ENCODE measurements at regions of chr7 and their contacts with region 1.

Region 1: GRCh38 chr7:5396999-5397663 is 26.5 kb downstream of the TNRC18 start:
- DNase-seq: peak; percentile 77 to 99 (median 87)
- ATAC-seq: peak; percentile 89
- H3K4me3 ChIP-seq: peak overlapping the region; percentile 93
- H3K4me3 Mint-ChIP-seq: peak overlapping the region; percentile 91
- H3K27ac ChIP-seq: peak overlapping the region; percentile 77 to 91
- H3K27ac Mint-ChIP-seq: peak overlapping the region; percentile 91
- H3K4me1 ChIP-seq: peaks cover 48% of the 10 kb centered on the region
- H3K4me1 Mint-ChIP-seq: peaks cover 25% of the 10 kb centered on the region
- H3K27me3 ChIP-seq: no peaks in the 10 kb centered on the region
- H3K27me3 Mint-ChIP-seq: no peaks in the 10 kb centered on the region
- CTCF ChIP-seq: no peak

Region 2: GRCh38 chr7:5423844-5424688 is 26.9 kb after region 1 on chr7:
- CTCF ChIA-PET with region 1: interaction called, 4 read pairs
- POLR2A ChIA-PET with region 1: interaction called, 25 read pairs
- intact Hi-C with region 1: loop called (anchors 2 kb)
- DNase-seq: peak in 8 of 14 experiments; percentile 18 to 82 (median 50)
- ATAC-seq: peak; percentile 43
- H3K4me3 ChIP-seq: peak overlapping the region; percentile 42
- H3K4me3 Mint-ChIP-seq: peak overlapping the region; percentile 88
- H3K27ac ChIP-seq: no peak overlapping the region
- H3K27ac Mint-ChIP-seq: peak overlapping the region; percentile 61
- H3K4me1 ChIP-seq: peaks cover 98% of the 10 kb centered on the region
- H3K4me1 Mint-ChIP-seq: peaks cover 49% of the 10 kb centered on the region
- H3K27me3 ChIP-seq: peaks cover 86 to 88% of the 10 kb centered on the region in 2 experiments
- H3K27me3 Mint-ChIP-seq: peaks cover 71% of the 10 kb centered on the region
- CTCF ChIP-seq: no peak

Region 3: DNA sequence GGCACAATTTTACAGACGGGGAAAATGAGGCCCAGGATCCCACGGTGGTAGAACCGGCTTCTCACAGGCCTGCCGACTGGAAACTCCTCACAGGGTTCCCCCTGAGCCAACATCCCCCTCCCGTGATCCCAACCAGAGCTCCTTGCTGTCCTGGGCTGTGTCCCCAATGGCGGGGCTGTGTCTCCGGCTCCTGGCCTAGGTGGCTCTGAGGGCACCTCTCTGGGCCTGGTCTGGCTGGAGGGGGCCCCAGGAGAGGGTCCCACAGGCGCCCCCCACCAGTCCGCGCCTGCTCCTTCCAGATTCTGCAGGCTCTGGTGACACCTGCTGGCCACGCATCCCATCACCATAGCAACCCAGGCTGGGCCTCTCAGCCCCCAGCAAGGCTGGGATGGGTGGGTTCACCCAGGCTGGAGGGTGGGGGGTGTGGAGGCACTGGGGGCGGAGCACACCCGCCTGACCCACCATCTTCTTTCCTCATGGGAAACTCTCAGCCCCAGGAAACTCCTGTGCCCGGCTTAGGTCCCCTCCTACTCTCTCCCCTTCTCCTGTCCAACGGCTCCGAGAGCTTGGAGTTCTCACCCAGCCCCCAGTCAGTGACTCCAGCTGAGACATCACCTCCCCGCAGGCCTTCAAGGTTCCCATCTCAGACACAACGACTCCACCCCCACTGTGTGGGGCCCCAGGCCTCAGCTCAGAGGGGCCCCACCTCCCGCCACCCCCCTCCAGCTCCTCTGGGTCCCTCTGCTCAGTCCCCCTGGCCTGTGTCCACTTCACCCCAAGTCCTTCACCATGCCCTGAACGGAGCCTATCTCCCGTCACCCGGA is 53.6 kb after region 1 on chr7:
- CTCF ChIA-PET with region 1: interaction called, 8 read pairs
- POLR2A ChIA-PET with region 1: interaction called, 5 read pairs
- intact Hi-C with region 1: loop called (anchors 1 to 2 kb)
- DNase-seq: peak in 11 of 14 experiments; percentile 20 to 69 (median 41)
- ATAC-seq: peak; percentile 68
- H3K4me3 ChIP-seq: no peak overlapping the region
- H3K4me3 Mint-ChIP-seq: no peak overlapping the region
- H3K27ac ChIP-seq: no peak overlapping the region
- H3K27ac Mint-ChIP-seq: no peak overlapping the region
- H3K4me1 ChIP-seq: no peaks in the 10 kb centered on the region
- H3K4me1 Mint-ChIP-seq: no peaks in the 10 kb centered on the region
- H3K27me3 ChIP-seq: peaks cover 0 to 3% of the 10 kb centered on the region in 2 experiments
- H3K27me3 Mint-ChIP-seq: peaks cover 4% of the 10 kb centered on the region
- CTCF ChIP-seq: peak; percentile 71

Region 4: DNA sequence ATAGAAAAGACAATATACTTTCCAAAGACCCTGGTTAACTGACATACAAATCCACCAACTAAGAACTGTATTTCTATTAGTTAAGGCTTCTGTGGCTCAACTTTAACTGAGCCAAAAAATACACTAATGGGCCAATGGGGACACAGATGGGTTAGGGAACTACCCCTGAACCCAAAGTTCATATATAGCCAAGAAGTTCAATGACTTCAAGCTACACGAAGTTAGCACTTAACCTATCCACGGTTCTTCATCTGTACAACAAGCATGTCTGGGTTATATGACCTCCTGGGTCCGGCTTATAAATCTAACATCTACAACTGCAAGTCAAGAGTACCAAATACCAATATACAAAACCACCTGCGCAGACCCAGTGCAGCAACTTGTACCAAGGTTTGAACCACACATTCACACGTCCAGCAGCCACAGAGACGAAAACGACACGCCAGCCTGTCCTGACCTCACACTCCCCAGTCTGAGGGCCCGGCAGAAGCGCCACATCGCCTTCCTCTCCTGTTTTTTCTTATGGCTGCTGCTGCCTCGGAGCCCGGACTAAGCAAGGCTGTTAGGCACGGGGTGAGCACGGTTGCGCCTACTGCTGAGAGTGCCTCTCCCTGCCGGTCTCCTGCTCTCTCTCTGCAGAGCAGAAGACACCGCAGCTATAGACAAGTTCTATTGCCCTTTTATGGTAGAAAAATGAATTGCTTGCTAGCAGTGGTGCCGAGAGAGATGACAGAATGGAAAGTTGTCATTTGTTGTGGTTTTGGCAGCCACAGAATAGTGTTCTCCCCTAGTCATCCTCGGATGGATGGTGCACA is 298.0 kb after region 1 on chr7:
- CTCF ChIA-PET with region 1: interaction called, 3 read pairs
- POLR2A ChIA-PET with region 1: interaction called, 3 read pairs
- intact Hi-C with region 1: loop called (anchors 10 kb)
- DNase-seq: peak; percentile 57 to 88 (median 69)
- ATAC-seq: peak; percentile 74
- H3K4me3 ChIP-seq: peak overlapping the region; percentile 54
- H3K4me3 Mint-ChIP-seq: peak overlapping the region; percentile 96
- H3K27ac ChIP-seq: peak overlapping the region; percentile 67 to 71
- H3K27ac Mint-ChIP-seq: peak overlapping the region; percentile 90
- H3K4me1 ChIP-seq: peaks cover 93% of the 10 kb centered on the region
- H3K4me1 Mint-ChIP-seq: peaks cover 100% of the 10 kb centered on the region
- H3K27me3 ChIP-seq: no peaks in the 10 kb centered on the region
- H3K27me3 Mint-ChIP-seq: no peaks in the 10 kb centered on the region
- CTCF ChIP-seq: no peak

Measured in CD4-positive, alpha-beta T cell (primary cell).